Uterus (tissue), 4 donors: ENCODE measurements at regions of chr5 and their contacts with region 1.

Region 1: DNA sequence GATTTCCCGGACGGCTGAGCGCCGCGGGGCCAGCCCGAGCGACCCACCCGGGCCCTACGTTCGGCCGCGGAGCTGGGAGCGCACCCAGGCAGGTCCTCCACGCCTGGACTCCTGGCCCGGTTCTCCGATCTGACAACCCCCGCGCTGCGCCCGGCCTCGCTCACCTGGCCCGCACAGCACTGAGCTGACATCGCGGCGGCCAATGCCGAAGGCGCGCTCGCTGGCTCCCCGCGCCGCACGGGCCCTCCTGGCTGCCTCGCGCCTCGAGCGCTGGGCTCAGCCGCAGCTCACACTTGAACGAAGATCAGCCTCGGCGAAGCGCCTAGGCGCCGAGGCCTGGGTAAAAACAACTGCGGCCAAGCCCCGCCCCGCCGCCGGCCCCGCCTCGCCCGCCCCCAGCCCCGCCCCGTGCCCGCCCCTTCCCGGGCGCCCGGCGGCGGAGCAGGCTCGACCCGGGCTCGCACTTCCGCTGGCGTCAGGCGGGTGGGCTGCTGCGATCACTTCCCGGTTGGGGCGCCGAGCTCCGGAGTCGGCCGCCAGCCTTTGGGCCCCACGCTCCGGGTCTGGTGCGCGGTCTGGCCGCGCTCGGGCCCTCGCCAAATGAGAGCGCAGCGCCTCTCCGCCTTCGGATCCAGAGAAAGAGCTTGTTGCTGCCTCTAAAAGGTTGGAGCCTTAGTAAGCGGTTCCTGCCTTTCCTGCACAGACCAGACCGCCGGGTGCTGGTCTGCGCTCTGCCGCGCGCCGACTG is at the start of gene SERINC5:
- DNase-seq: peak; percentile 79 to 85
- H3K4me3 ChIP-seq: peak within 1 kb of the TSS; percentile 51 to 64
- H3K27ac ChIP-seq: peak within 1 kb of the TSS; percentile 90 to 96
- H3K4me1 ChIP-seq: peaks cover 4 to 9% of the 10 kb centered on the region in 2 donors
- H3K27me3 ChIP-seq: no peaks in the 10 kb centered on the region
- CTCF ChIP-seq: peak in 1 of 4 experiments; percentile 29
- POLR2A ChIP-seq: peak; percentile 82 to 93
- total RNA-seq, gene SERINC5: 9.5 to 54.5 (median 22.4) TPM

Region 2: DNA sequence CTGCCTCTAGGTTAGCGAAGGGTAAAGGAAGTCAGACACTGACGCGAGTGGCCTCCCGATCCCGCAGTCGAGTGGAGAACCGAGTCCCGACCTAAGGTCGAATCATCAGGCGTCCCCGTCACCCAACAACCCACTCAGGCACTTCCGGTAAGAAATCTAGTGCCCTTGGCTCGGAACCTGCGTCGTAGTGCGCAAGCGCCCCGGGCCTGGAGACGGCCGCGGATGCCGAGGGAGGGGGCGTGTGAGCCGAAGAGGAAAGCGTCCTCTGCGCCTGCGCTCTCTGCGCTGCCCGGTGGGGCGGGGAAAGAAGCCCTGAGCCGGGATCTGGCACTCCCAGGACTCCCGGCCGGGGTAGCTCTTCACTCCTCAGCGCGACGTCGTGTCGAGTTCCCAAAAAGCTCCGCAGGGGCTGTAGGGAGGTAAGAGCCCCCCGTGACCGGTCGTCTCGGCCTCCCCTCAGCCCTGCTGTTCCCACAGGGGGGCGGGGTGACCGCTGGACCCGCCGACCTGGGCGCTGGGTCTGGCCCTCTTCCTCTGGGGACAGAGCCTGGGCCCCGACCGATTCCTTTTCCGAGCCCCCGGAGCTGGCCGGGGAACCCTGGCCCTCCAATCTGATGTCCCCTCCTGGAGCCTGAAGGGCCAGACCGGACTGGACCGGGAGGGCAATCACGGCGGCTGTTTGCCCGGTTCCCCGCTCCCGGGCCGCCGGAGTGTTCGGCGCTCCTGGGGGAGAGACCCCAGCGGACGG is 152.0 kb after region 1 on chr5 and contains the start of gene ZFYVE16:
- intact Hi-C with region 1: loop called (anchors 10 kb)
- DNase-seq: peak; percentile 98 to 99
- H3K4me3 ChIP-seq: peak within 1 kb of the TSS; percentile 89 to 98
- H3K27ac ChIP-seq: peak within 1 kb of the TSS; percentile 97 to 98
- H3K4me1 ChIP-seq: peaks cover 0 to 7% of the 10 kb centered on the region in 2 donors
- H3K27me3 ChIP-seq: no peaks in the 10 kb centered on the region
- CTCF ChIP-seq: peak in 3 of 4 experiments; percentile 20 to 61 (median 59)
- POLR2A ChIP-seq: peak; percentile 86 to 90
- total RNA-seq, gene ZFYVE16: 13.3 to 119 (median 64.8) TPM